Naive thymus-derived CD4-positive, alpha-beta T cell (primary cell): ENCODE measurements at regions of chr1 and their contacts with region 1.

Region 1: DNA sequence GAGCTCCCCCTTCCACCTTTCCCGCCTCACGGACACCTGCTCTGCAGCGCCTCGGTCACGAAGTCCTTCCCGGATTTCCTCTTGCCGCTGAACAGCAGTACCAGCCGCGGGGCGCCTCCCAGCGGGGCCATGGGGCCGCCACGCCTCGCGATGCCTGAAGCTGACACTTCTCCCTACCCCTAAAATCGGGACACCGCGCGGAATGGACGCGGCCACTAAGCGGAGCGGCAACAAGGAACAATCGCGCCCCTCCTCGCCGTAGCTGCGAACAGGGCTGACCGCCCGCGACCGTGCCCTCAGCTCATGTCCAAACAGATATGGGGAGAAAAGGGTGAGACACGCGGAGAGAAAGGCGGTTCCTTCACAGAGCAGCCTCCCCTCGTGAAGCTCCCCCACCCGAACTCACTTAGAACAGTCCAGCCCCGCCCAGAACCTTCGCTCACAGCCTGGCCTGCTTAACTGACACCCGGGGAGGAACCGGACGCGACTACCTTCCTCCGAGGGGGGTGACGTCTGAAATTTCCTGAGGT is at the start of gene PMVK:
- DNase-seq: peak; percentile 84 to 99 (median 97)
- ATAC-seq: peak; percentile 92
- H3K4me3 ChIP-seq: peak within 1 kb of the TSS; percentile 68
- H3K4me3 Mint-ChIP-seq: peak within 1 kb of the TSS; percentile 86 to 99 (median 95)
- H3K27ac ChIP-seq: peak within 1 kb of the TSS; percentile 97
- H3K27ac Mint-ChIP-seq: peak within 1 kb of the TSS; percentile 96 to 100 (median 99)
- H3K4me1 ChIP-seq: peaks cover 25 to 38% of the 10 kb centered on the region in 2 donors
- H3K4me1 Mint-ChIP-seq: peaks cover 41 to 68% (median 50%) of the 10 kb centered on the region in 7 donors
- H3K27me3 ChIP-seq: no peaks in the 10 kb centered on the region
- H3K27me3 Mint-ChIP-seq: no peaks in the 10 kb centered on the region
- total RNA-seq, gene PMVK: 11.3 to 35.1 (median 12.6) TPM

Region 2: DNA sequence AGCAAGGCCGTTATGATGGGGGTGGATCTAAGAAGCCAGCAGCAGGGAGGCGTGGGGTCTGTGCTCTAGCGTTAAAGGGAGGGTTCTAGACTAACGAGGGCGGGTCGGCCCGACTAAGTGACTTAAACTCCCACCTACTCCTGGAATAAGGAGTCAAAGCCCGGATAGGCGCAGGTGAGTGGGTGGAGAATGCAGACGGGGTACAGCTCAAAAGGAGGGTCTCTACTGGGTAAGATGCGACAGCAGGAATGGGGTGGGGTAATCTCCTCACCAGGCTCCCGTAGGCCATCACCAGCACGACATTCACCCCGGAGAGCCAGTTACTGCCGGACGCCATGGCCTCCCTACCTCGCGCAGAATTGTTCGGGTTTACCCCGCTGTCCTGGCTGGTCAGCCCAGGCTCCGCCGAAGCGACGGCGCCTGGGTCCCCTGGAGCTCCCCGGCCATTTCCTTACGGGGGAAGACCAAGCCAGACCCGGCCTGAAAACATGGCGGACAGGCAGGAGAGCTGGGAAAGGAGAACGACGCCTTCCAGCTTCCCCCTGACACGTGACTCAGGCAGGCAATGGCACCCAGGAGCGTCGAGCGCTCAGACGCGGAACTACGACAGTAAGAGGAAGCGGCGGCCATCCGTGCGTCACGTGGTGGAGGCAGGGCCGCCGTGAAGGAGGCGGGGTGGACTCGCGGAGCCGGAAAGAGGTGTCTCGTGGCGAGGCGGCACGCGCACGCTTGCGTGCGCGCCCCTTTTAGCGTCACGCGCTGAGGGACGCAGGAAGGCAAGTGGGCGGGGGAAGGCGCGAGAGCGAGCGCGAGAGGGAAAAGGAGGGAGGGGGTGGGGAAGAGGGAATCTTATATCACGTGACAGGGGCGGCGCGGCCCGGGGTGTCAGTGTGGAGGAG is 716.3 kb before region 1 on chr1 and contains the start of gene UBAP2L:
- CTCF ChIA-PET with region 1: no interaction called
- POLR2A ChIA-PET with region 1: no interaction called
- intact Hi-C with region 1: loop called (anchors 2 kb)
- DNase-seq: peak; percentile 92 to 99 (median 99)
- ATAC-seq: peak; percentile 91
- H3K4me3 ChIP-seq: peak within 1 kb of the TSS; percentile 95
- H3K4me3 Mint-ChIP-seq: peak within 1 kb of the TSS; percentile 83 to 100 (median 98)
- H3K27ac ChIP-seq: peak within 1 kb of the TSS; percentile 99
- H3K27ac Mint-ChIP-seq: peak within 1 kb of the TSS; percentile 96 to 100 (median 99)
- H3K4me1 ChIP-seq: peaks cover 42 to 45% of the 10 kb centered on the region in 2 donors
- H3K4me1 Mint-ChIP-seq: peaks cover 46 to 76% (median 64%) of the 10 kb centered on the region in 7 donors
- H3K27me3 ChIP-seq: no peaks in the 10 kb centered on the region
- H3K27me3 Mint-ChIP-seq: peaks cover 0 to 4% (median 0%) of the 10 kb centered on the region in 5 donors
- total RNA-seq, gene UBAP2L: 183 to 235 (median 189) TPM

Region 3: DNA sequence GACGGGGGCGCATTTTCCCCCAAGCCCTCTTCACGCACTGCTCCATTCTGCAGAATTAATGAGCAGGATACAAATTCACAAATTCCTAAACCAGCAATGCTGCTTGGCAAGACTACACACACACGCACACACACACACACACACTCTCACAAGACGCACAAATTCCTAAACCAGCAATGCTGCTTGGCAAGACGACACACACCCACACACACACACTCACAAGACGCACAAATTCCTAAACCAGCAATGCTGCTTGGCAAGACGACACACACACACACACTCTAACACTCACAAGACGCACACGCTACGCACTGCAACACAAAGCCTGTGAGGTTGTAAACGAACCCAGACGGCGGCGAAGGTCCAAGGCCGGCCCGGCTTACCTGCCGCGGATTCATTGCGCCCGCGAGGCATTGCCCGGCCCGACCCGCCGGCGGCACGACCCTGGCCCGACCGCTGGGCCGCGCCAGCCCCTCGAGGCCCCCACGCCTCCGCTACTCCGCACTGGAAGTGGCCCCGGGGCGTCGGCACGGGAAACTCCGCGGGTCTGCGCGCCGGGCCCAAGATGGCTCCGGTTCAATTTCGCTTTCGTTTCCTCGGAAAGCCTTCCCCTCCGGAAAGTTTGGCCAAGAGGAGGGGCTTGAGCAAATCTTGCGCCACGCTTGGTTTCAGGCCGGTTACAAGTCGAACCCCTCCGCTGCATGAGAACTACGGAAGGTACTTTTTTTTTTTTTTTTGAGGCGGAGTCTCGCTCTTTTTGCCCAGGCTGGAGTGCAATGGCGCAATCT is 328.8 kb before region 1 on chr1 and contains the start of gene ADAR:
- CTCF ChIA-PET with region 1: no interaction called
- POLR2A ChIA-PET with region 1: interaction called, 3 read pairs
- intact Hi-C with region 1: loop called (anchors 1 to 2 kb)
- DNase-seq: peak; percentile 67 to 95 (median 90)
- ATAC-seq: peak; percentile 92
- H3K4me3 ChIP-seq: peak within 1 kb of the TSS; percentile 78
- H3K4me3 Mint-ChIP-seq: peak within 1 kb of the TSS; percentile 91 to 100 (median 98)
- H3K27ac ChIP-seq: peak within 1 kb of the TSS; percentile 97
- H3K27ac Mint-ChIP-seq: peak within 1 kb of the TSS; percentile 94 to 99 (median 99)
- H3K4me1 ChIP-seq: peaks cover 40 to 42% of the 10 kb centered on the region in 2 donors
- H3K4me1 Mint-ChIP-seq: peaks cover 63 to 90% (median 75%) of the 10 kb centered on the region in 7 donors
- H3K27me3 ChIP-seq: no peaks in the 10 kb centered on the region
- H3K27me3 Mint-ChIP-seq: no peaks in the 10 kb centered on the region
- total RNA-seq, gene ADAR: 206 to 408 (median 237) TPM

Region 4: GRCh38 chr1:154784924-154785531 is 151.6 kb before region 1 on chr1:
- CTCF ChIA-PET with region 1: no interaction called
- POLR2A ChIA-PET with region 1: interaction called, 3 read pairs
- intact Hi-C with region 1: loop called in 1 of 2 experiments (anchors 5 kb)
- DNase-seq: peak in 8 of 9 donors; percentile 37 to 87 (median 84)
- ATAC-seq: peak; percentile 94
- H3K4me3 ChIP-seq: peak overlapping the region; percentile 16
- H3K4me3 Mint-ChIP-seq: peak overlapping the region; percentile 45 to 84 (median 69)
- H3K27ac ChIP-seq: peak overlapping the region; percentile 78
- H3K27ac Mint-ChIP-seq: peak overlapping the region; percentile 94 to 99 (median 98)
- H3K4me1 ChIP-seq: peaks cover 15 to 33% of the 10 kb centered on the region in 2 donors
- H3K4me1 Mint-ChIP-seq: peaks cover 25 to 73% (median 54%) of the 10 kb centered on the region in 7 donors
- H3K27me3 ChIP-seq: no peaks in the 10 kb centered on the region
- H3K27me3 Mint-ChIP-seq: no peaks in the 10 kb centered on the region

Region 5: DNA sequence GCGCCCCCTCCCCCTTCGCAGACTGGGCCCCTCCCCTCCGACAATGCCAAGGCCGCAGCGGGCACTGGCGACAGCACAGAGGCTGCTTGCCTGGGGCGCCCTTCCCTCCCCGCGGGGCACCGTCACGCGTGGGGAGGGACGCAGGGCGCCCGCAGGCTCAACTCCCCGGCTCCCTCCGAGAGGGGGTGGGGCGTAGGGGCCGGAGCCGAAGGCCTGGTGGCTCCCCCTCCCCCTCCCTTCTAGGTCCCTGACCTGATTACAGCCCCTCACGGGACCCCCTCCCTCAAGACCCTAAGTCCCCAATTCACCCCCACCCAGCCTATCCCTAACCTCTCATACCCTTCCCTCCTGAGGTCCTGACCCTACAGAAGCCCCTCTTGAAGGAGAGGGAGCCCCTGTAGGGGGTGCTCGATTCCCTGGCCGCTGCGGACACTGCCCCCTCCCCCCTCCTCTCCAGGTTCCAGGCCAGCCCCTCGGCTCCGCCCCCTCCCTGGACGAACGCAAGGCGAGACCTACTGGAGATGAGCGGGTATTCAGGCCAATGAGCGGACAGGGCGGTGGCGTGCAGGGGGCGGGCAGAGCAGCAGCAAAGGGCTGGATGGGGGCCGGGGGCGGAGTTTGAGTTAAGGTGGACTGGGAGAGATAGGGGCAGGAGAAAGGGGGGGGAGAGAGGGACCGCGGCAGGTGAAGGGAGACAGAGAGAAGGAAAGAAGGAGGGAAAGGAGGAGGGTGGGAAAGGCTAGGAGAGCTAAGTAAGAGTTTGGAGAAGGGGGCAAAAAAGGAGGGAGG is 65.2 kb after region 1 on chr1:
- CTCF ChIA-PET with region 1: interaction called, 9 read pairs
- POLR2A ChIA-PET with region 1: interaction called, 9 read pairs
- intact Hi-C with region 1: loop called (anchors 1 to 2 kb)
- DNase-seq: peak; percentile 90 to 98 (median 95)
- ATAC-seq: peak; percentile 87
- H3K4me3 ChIP-seq: peak overlapping the region; percentile 95
- H3K4me3 Mint-ChIP-seq: peak overlapping the region; percentile 90 to 100 (median 95)
- H3K27ac ChIP-seq: peak overlapping the region; percentile 88
- H3K27ac Mint-ChIP-seq: peak overlapping the region; percentile 70 to 99 (median 91)
- H3K4me1 ChIP-seq: peaks cover 23 to 40% of the 10 kb centered on the region in 2 donors
- H3K4me1 Mint-ChIP-seq: peaks cover 29 to 63% (median 55%) of the 10 kb centered on the region in 7 donors
- H3K27me3 ChIP-seq: no peaks in the 10 kb centered on the region
- H3K27me3 Mint-ChIP-seq: no peaks in the 10 kb centered on the region

Region 6: DNA sequence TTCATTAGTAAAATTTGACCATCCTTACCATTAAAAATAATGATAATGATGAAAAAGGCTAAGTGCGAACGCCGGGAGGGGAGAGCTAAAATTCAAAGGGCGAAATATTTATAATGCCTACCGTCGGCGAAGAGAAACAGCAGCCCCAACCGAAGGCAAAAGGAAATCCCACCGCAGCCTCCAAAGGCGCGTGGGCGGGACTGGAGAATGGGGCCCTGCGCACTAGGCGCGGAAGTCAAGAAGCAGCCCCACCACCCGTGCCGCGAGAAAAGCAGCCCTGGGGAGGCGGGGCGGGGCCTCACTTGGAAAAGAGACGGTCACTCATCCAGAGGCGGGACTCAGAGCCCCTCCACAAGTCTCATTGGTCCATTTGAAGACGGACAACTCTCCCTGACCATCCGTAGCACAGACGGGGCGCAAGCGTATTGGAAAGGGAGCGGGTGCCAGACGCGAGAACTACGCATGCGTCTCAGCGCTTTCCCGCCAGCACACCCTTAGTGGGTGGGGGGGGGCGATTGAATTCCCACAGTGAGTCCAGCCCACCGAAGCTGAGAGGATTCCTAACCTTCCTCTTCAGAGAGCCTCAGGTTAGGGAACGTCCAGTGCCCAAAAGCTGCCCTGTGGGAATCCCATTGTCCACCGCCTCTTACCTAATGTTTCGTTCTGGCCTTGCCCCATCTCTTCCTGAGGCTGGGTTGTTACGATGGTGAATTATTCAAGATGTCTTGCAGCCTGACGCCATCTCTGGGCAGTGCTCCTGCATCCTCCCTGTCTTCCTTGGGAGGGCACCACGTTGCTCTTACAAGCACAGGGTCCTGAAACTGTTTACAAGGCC is 290.9 kb after region 1 on chr1:
- CTCF ChIA-PET with region 1: no interaction called
- POLR2A ChIA-PET with region 1: no interaction called
- intact Hi-C with region 1: loop called in 1 of 2 experiments (anchors 5 kb)
- DNase-seq: peak; percentile 89 to 99 (median 98)
- ATAC-seq: peak; percentile 97
- H3K4me3 ChIP-seq: peak overlapping the region; percentile 75
- H3K4me3 Mint-ChIP-seq: peak overlapping the region; percentile 79 to 95 (median 88)
- H3K27ac ChIP-seq: peak overlapping the region; percentile 75
- H3K27ac Mint-ChIP-seq: peak overlapping the region; percentile 77 to 97 (median 88)
- H3K4me1 ChIP-seq: peaks cover 11 to 15% of the 10 kb centered on the region in 2 donors
- H3K4me1 Mint-ChIP-seq: peaks cover 11 to 26% (median 19%) of the 10 kb centered on the region in 7 donors
- H3K27me3 ChIP-seq: no peaks in the 10 kb centered on the region
- H3K27me3 Mint-ChIP-seq: peaks cover 0 to 2% (median 0%) of the 10 kb centered on the region in 5 donors